ENCODE measurements at regions of chr3 and their contacts with region 1.

Region 1: GRCh38 chr3:28935146-28935545 is 345.7 kb upstream of the RBMS3 start:
- DNase-seq: peak; percentile 61
- H3K4me3 Mint-ChIP-seq: peak overlapping the region; percentile 74
- H3K27ac Mint-ChIP-seq: peak overlapping the region; percentile 85
- H3K4me1 Mint-ChIP-seq: peaks cover 40% of the 10 kb centered on the region
- H3K27me3 Mint-ChIP-seq: no peaks in the 10 kb centered on the region

Region 2: GRCh38 chr3:28972921-28973320 is 37.8 kb after region 1 on chr3:
- intact Hi-C with region 1: loop called (anchors 5 kb)
- DNase-seq: no peak
- H3K4me3 Mint-ChIP-seq: no peak overlapping the region
- H3K27ac Mint-ChIP-seq: peak overlapping the region; percentile 62
- H3K4me1 Mint-ChIP-seq: peaks cover 5% of the 10 kb centered on the region
- H3K27me3 Mint-ChIP-seq: peaks cover 2% of the 10 kb centered on the region